Brain microvascular endothelial cell (primary cell): ENCODE measurements at regions of chr12 and their contacts with region 1.

Region 1: GRCh38 chr12:11486623-11487444 is 91.5 kb upstream of the PRB2 start:
- DNase-seq: peak; percentile 79
- H3K4me3 ChIP-seq: no peak overlapping the region
- H3K27ac ChIP-seq: no peak overlapping the region
- H3K27me3 ChIP-seq: no peaks in the 10 kb centered on the region
- CTCF ChIP-seq: peak; percentile 90

Region 2: DNA sequence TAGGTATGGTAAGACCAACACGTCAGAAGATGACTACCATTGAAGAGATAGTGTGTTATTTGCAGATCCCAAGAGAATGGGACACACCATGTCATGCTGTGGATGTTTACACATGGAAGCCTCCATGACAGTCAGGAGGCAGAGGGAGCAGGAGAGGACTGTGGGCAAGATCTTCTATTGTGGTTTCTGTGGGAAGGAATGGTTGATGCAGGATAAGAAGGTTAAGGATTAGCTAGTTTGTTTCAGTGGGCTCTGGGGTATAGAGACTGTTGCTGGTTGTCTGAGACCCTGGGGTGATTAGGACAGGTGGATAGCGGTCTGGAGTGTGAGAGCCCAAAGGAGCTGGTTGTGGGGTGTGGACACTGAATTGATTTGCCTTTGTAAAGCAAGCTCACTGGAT is 707.7 kb before region 1 on chr12:
- in situ Hi-C with region 1: loop called (anchors 25 kb)
- DNase-seq: no peak
- H3K4me3 ChIP-seq: no peak overlapping the region
- H3K27ac ChIP-seq: no peak overlapping the region
- H3K27me3 ChIP-seq: no peaks in the 10 kb centered on the region
- CTCF ChIP-seq: no peak

Region 3: GRCh38 chr12:11228296-11228879 is 258.4 kb before region 1 on chr12:
- in situ Hi-C with region 1: loop called (anchors 25 kb)
- DNase-seq: peak; percentile 70
- H3K4me3 ChIP-seq: no peak overlapping the region
- H3K27ac ChIP-seq: no peak overlapping the region
- H3K27me3 ChIP-seq: no peaks in the 10 kb centered on the region
- CTCF ChIP-seq: peak; percentile 90